Dorsolateral prefrontal cortex (tissue), 120 donors: ENCODE measurements at regions of chr4 and their contacts with region 1.

Region 1: GRCh38 chr4:7192252-7193029 is at the start of gene SORCS2:
- DNase-seq: peak; percentile 43 to 90 (median 65)
- H3K4me3 ChIP-seq: peak within 1 kb of the TSS; percentile 44 to 82 (median 67)
- H3K27ac ChIP-seq: peak within 1 kb of the TSS in 22 of 59 donors; percentile 3 to 78 (median 33)
- H3K27me3 ChIP-seq: peaks cover 0 to 35% (median 0%) of the 10 kb centered on the region in 45 donors
- CTCF ChIP-seq: peak; percentile 15 to 94 (median 73)
- total RNA-seq, gene SORCS2: 17.6 to 63.7 (median 32.1) TPM

Region 2: GRCh38 chr4:7094916-7095315 is 97.5 kb before region 1 on chr4:
- intact Hi-C with region 1: no loop called
- DNase-seq: peak in 2 of 10 donors; percentile 26 to 30
- H3K4me3 ChIP-seq: no peak overlapping the region
- H3K27ac ChIP-seq: no peak overlapping the region
- H3K27me3 ChIP-seq: no peaks in the 10 kb centered on the region
- CTCF ChIP-seq: no peak

Region 3: GRCh38 chr4:7244751-7245320 is 52.4 kb after region 1 on chr4:
- intact Hi-C with region 1: loop called in 1 of 2 experiments (anchors 5 kb)
- DNase-seq: peak in 2 of 10 donors; percentile 37 to 52
- H3K4me3 ChIP-seq: no peak overlapping the region
- H3K27ac ChIP-seq: peak overlapping the region in 26 of 59 donors; percentile 8 to 73 (median 52)
- H3K27me3 ChIP-seq: no peaks in the 10 kb centered on the region
- CTCF ChIP-seq: no peak

Region 4: DNA sequence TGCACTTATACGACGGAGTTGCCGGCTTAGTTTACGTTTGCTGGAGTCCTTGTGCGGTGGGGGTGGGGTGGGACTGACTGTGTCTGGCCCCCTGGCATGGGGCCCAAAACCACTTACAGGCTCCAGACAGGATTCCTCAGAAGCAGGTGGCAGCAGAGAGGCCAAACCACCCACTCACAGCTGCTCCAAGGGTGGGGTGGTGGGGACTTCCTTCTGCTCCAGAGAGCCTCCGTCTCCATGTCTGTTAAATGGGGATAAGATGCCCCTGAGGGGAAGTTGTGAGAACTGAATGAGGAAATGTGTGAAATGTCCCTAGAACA is 205.6 kb after region 1 on chr4:
- intact Hi-C with region 1: loop called (anchors 2 to 10 kb)
- DNase-seq: peak in 5 of 10 donors; percentile 34 to 52 (median 44)
- H3K4me3 ChIP-seq: no peak overlapping the region
- H3K27ac ChIP-seq: peak overlapping the region in 5 of 59 donors; percentile 1 to 44 (median 9)
- H3K27me3 ChIP-seq: peaks cover 0 to 4% (median 0%) of the 10 kb centered on the region in 45 donors
- CTCF ChIP-seq: peak in 6 of 56 donors; percentile 9 to 23 (median 12)

Region 5: DNA sequence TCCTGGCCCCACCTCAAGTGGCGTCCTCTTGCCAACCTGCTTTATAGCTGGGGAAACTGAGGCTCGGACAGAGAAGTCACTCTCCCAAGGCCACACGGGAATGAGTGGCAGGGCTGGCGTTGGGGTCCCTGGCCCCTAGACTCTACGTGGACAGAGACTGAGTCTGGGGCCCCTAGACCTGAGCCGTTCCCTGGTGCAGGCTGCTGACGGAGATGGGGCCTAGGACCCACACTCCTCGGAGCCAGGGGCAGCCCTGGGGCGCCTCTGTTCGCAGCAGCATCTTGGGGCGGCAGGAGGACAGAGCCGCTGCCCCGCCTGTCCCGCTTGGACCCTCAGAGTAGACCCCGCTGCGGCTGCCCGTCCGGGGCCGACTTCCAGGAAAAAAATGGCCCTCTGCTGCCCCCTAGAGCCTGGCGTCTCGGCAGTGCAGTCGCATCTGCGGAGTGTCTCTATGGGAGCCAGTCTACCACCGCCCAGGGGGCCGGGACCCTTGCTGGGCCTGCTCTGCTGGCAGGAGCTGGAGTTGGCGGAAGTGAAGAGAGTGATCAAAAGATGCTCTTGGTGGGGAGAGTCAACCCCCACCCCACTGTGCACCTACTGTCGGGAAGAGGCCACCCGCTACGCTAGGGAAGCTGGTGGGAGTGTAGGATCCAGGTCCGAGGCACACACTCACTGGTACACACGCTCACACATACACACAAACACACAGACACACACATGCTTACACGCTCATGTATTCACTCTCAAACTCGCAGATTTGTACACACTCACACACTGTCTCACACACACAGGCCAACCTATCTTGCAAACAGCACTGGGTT is 527.1 kb after region 1 on chr4:
- intact Hi-C with region 1: loop called (anchors 1 to 2 kb)
- DNase-seq: peak; percentile 49 to 83 (median 66)
- H3K4me3 ChIP-seq: peak overlapping the region in 35 of 59 donors; percentile 2 to 57 (median 28)
- H3K27ac ChIP-seq: no peak overlapping the region
- H3K27me3 ChIP-seq: peaks cover 0 to 5% (median 0%) of the 10 kb centered on the region in 45 donors
- CTCF ChIP-seq: peak; percentile 62 to 95 (median 88)